ENCODE measurements at regions of chr2 and their contacts with region 1.

Region 1: GRCh38 chr2:24490674-24491625 is at the start of gene NCOA1:
- DNase-seq: peak; percentile 88 to 97 (median 92)
- ATAC-seq: peak; percentile 87
- H3K4me3 ChIP-seq: peak within 1 kb of the TSS; percentile 69
- H3K27ac ChIP-seq: peak within 1 kb of the TSS; percentile 77
- H3K4me1 ChIP-seq: peaks cover 24 to 44% of the 10 kb centered on the region in 2 experiments
- H3K27me3 ChIP-seq: no peaks in the 10 kb centered on the region
- CTCF ChIP-seq: peak in 2 of 3 experiments; percentile 8 to 30; a peak in 3 of 6 replicates
- EP300 ChIP-seq: 0 out of 2 replicates have a peak, but pooled peaks have one; percentile 34
- POLR2A ChIP-seq: peak; percentile 57; the same call in 1 of the 2 replicates
- RAD21 ChIP-seq: peak in 1 of 2 experiments; percentile 31
- polyA plus RNA-seq, gene NCOA1: 4.9 to 6.2 TPM

Region 2: GRCh38 chr2:24509425-24509824 is 18.5 kb after region 1 on chr2:
- CTCF ChIA-PET with region 1: no interaction called
- POLR2A ChIA-PET with region 1: interaction called, 33 read pairs
- in situ Hi-C with region 1: no loop called
- intact Hi-C with region 1: no loop called
- DNase-seq: no peak
- ATAC-seq: no peak
- H3K4me3 ChIP-seq: no peak overlapping the region
- H3K27ac ChIP-seq: no peak overlapping the region
- H3K4me1 ChIP-seq: peaks cover under 1 to 20% of the 10 kb centered on the region in 2 experiments; a peak in 3 of 5 replicates
- H3K27me3 ChIP-seq: no peaks in the 10 kb centered on the region
- CTCF ChIP-seq: no peak
- EP300 ChIP-seq: no peak
- POLR2A ChIP-seq: no peak
- RAD21 ChIP-seq: no peak

Region 3: GRCh38 chr2:24538720-24539119 is 47.8 kb after region 1 on chr2:
- CTCF ChIA-PET with region 1: no interaction called
- POLR2A ChIA-PET with region 1: no interaction called
- in situ Hi-C with region 1: no loop called
- intact Hi-C with region 1: no loop called
- DNase-seq: no peak
- ATAC-seq: no peak
- H3K4me3 ChIP-seq: no peak overlapping the region
- H3K27ac ChIP-seq: no peak overlapping the region
- H3K4me1 ChIP-seq: no peaks in the 10 kb centered on the region
- H3K27me3 ChIP-seq: no peaks in the 10 kb centered on the region
- CTCF ChIP-seq: no peak
- EP300 ChIP-seq: no peak
- POLR2A ChIP-seq: no peak
- RAD21 ChIP-seq: no peak